Endothelial cell of umbilical vein (primary cell): ENCODE measurements at regions of chr10 and their contacts with region 1.

Region 1: DNA sequence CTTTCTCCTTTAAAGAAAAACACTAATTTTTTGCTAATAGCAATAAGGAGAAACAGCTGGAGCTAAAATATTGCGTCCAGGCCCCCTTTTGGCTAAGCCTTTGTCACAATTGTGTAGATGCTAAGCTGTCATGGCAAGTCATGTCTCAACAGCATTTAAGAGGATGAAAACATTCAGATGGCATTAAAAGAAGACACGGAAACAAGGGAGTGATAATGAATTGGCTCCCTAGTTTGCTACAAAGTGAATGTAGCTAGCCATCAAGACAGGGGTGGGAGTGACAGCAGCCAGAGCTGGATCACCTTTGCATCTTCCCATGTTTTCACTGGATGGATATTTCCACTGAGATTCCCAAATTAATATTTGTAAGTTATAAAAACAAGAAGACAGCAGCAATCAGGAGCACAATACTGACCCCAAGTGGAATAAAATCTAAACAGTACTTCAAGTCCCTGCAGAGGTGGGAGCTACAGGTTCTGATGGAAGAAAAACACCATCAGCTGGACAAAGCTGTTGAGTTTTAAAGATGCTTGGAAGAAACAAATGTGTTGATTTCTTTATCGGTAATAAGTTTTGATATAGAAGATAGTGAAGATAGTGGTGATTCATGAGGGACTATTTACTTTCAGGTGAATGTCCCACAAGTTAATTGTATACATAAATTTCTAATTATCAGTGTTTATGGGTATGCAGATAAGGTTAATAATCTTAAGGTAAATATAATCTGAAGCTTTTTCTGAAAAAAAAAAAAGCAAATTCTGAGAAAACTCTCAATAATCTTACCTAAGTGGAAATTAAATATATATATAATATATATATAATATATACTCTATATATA is 129.4 kb downstream of the SLC16A9 start:
- DNase-seq: peak; percentile 45
- H3K4me3 ChIP-seq: no peak overlapping the region
- H3K27ac ChIP-seq: no peak overlapping the region
- H3K4me1 ChIP-seq: no peaks in the 10 kb centered on the region
- H3K27me3 ChIP-seq: no peaks in the 10 kb centered on the region
- CTCF ChIP-seq: peak; percentile 7 to 18
- POLR2A ChIP-seq: no peak

Region 2: DNA sequence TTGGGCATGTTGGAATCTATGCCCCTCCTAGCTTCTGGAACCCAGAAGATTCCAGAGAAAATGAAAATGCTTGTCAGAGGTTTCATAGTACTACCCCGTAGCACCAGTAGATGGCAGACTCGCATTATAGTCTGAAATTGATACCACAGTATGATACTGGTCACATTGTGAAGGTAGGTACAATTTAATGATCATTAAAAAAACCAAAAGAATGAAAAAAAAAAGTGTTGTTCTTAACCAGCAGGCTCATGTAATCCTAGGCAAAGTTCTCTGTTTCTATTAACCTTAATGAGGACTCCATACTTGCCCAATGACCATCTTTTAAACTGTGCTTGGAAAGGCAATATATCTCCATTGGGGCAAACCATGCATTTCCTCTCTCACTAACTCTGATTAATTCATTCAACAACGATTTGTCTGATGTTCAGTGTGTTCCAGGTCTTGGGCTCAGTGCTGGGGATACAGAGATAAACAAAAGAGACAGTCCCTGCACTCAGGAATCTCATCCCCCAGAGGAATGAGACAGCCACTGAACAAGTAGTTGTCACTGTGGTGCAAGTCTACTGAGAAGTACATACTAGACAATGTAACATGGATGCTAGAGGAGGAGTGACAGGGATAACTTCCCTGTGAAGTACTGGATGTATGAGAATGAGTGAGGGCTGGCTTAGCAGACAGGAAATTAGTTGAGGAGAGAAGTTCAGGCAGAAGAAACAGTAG is 627.3 kb before region 1 on chr10:
- CTCF ChIA-PET with region 1: no interaction called
- POLR2A ChIA-PET with region 1: no interaction called
- dilution Hi-C with region 1: no loop called
- intact Hi-C with region 1: loop called (anchors 2 kb)
- DNase-seq: peak; percentile 47
- H3K4me3 ChIP-seq: no peak overlapping the region
- H3K27ac ChIP-seq: no peak overlapping the region
- H3K4me1 ChIP-seq: no peaks in the 10 kb centered on the region
- H3K27me3 ChIP-seq: no peaks in the 10 kb centered on the region
- CTCF ChIP-seq: peak; percentile 42 to 64
- POLR2A ChIP-seq: no peak

Region 3: DNA sequence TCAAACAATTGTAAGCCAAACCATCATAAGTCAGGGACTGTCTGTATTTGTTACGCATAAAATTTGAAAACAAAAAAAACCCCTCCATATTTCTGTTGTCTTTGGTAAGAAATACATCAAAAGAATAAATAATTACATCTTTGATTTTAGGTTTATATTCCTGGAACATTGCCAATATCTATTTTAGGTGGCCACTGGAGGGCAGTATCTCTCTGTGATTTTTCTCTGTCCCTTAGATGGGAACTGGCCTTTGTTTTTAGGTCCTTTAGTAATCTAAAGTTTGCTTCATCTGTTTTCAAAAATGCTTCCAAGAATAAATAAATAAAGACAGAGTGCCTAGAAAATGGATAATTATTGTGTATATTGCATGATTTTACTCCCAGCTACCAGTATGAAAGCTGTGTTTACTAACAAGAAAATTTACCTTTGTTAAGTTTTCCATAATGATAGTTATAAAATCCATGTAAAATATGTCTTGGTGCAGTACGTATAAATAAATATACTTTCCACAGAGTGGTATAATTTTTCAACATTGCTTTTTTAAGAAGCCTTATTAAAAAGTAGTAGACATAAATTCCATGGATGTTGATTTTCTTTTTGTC is 339.6 kb before region 1 on chr10:
- CTCF ChIA-PET with region 1: no interaction called
- POLR2A ChIA-PET with region 1: no interaction called
- dilution Hi-C with region 1: no loop called
- intact Hi-C with region 1: loop called (anchors 1 kb)
- DNase-seq: peak; percentile 52
- H3K4me3 ChIP-seq: no peak overlapping the region
- H3K27ac ChIP-seq: no peak overlapping the region
- H3K4me1 ChIP-seq: no peaks in the 10 kb centered on the region
- H3K27me3 ChIP-seq: no peaks in the 10 kb centered on the region
- CTCF ChIP-seq: peak; percentile 18 to 22
- POLR2A ChIP-seq: no peak

Region 4: GRCh38 chr10:59362959-59363381 is 217.3 kb before region 1 on chr10:
- CTCF ChIA-PET with region 1: no interaction called
- POLR2A ChIA-PET with region 1: no interaction called
- dilution Hi-C with region 1: no loop called
- intact Hi-C with region 1: loop called (anchors 1 kb)
- DNase-seq: peak; percentile 14
- H3K4me3 ChIP-seq: peak overlapping the region in 1 of 3 experiments; percentile 23
- H3K27ac ChIP-seq: no peak overlapping the region
- H3K4me1 ChIP-seq: no peaks in the 10 kb centered on the region
- H3K27me3 ChIP-seq: no peaks in the 10 kb centered on the region
- CTCF ChIP-seq: no peak
- POLR2A ChIP-seq: no peak

Region 5: DNA sequence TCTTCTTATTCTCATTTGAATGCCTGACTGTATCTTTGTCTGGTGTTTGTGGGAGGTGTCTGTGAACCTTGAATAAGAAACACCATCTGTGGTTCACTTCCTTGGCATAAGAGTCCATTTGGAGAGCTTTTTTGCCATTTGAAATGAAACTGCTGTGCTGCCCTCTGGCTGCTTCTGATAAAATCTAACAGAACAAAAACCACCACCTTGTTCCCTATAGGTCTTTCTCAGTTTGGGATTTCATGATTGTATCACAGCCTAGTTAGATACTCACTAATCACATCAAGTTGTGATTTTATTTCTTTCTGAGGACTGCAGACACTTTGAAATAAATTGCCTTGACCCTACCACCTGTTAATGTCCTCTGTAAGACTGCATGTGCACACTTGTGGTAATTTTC is 115.2 kb before region 1 on chr10:
- CTCF ChIA-PET with region 1: no interaction called
- POLR2A ChIA-PET with region 1: no interaction called
- dilution Hi-C with region 1: no loop called
- intact Hi-C with region 1: no loop called
- DNase-seq: no peak
- H3K4me3 ChIP-seq: no peak overlapping the region
- H3K27ac ChIP-seq: no peak overlapping the region
- H3K4me1 ChIP-seq: no peaks in the 10 kb centered on the region
- H3K27me3 ChIP-seq: no peaks in the 10 kb centered on the region
- CTCF ChIP-seq: no peak
- POLR2A ChIP-seq: no peak

Region 6: DNA sequence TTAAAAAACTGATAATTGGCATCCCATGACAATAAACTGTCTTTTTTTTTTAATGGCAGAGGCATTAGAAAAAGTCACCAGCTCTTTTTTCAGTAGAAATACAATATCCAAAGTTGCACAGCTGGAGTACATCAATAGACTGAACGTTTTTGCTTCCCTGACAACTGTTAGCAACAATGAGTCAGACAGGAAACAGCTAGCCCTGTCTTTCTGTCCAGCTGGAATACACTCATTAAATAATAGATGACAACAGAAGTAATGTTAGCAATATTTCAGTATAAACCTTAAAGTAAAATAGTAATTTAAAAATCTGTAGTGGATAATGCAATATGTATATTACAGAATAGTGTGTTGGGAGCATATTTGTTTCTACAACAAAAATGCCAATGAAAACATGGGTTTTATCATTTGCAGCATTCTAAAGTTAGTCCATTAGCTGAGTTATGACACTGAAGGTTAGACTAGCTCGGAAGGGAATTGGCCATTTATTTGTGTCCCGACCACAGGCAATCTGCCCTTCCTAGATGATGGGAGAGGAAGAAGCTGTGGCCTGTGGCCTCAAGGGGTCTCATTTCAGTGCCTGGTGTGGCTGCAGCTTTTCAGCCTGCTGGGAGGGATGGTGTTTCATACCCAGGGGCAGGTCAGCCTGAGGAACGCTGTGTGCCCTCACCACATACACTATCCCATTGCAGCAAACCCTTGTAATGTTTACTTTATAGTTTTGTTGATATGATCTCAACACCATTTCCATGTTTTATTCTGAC is 43.9 kb before region 1 on chr10:
- CTCF ChIA-PET with region 1: no interaction called
- POLR2A ChIA-PET with region 1: no interaction called
- dilution Hi-C with region 1: no loop called
- intact Hi-C with region 1: loop called (anchors 5 kb)
- DNase-seq: peak; percentile 78
- H3K4me3 ChIP-seq: no peak overlapping the region
- H3K27ac ChIP-seq: peak overlapping the region; percentile 27
- H3K4me1 ChIP-seq: peaks cover 11% of the 10 kb centered on the region
- H3K27me3 ChIP-seq: no peaks in the 10 kb centered on the region
- CTCF ChIP-seq: no peak
- POLR2A ChIP-seq: no peak

Region 7: GRCh38 chr10:59553162-59553900 is 26.9 kb before region 1 on chr10:
- CTCF ChIA-PET with region 1: no interaction called
- POLR2A ChIA-PET with region 1: no interaction called
- dilution Hi-C with region 1: no loop called
- intact Hi-C with region 1: loop called (anchors 5 kb)
- DNase-seq: no peak
- H3K4me3 ChIP-seq: no peak overlapping the region
- H3K27ac ChIP-seq: no peak overlapping the region
- H3K4me1 ChIP-seq: no peaks in the 10 kb centered on the region
- H3K27me3 ChIP-seq: no peaks in the 10 kb centered on the region
- CTCF ChIP-seq: no peak
- POLR2A ChIP-seq: no peak

Region 8: DNA sequence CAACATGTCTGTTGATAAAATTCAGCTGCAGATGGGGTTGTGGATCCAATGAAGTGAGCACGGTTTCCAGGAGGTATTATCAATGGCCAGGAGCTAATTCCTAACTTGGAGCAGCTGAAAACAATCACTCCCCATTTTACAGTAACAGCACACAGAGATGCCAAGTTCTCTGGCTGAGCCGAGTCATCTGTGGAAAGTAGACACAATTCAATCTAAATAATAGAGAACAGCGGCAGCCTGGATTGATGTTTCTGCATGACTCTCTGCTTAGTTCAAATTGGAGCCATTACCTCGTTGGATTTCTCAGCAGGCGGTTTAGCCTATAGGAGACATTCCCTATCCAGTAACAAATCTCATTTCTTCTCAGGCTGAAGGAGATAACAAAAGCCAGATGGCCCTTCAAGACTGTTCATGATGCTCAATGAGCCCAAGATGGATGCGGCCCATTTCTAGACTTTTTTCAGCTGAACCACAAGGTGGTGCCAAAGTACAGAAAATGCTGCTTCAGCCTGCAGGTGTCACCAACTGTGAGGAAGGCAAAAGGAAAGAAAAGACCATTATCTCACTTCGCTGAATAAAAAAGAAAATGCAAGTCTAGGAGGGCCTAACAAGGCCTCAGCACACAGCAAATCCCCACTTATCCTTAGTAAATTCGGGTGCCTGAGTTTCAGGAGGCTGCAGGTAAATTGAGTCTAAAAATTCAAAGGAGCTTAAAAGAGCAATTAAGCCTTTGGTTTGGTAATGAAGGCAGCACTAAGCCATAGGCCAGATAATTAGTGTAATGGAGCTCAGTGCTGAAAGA is 45.7 kb after region 1 on chr10:
- CTCF ChIA-PET with region 1: no interaction called
- POLR2A ChIA-PET with region 1: no interaction called
- dilution Hi-C with region 1: no loop called
- intact Hi-C with region 1: no loop called
- DNase-seq: peak; percentile 67
- H3K4me3 ChIP-seq: no peak overlapping the region
- H3K27ac ChIP-seq: no peak overlapping the region
- H3K4me1 ChIP-seq: no peaks in the 10 kb centered on the region
- H3K27me3 ChIP-seq: peaks cover 4 to 7% of the 10 kb centered on the region in 2 experiments
- CTCF ChIP-seq: peak; percentile 68 to 69
- POLR2A ChIP-seq: no peak

Region 9: GRCh38 chr10:59657724-59658123 is 77.5 kb after region 1 on chr10:
- CTCF ChIA-PET with region 1: no interaction called
- POLR2A ChIA-PET with region 1: no interaction called
- dilution Hi-C with region 1: no loop called
- intact Hi-C with region 1: no loop called
- DNase-seq: no peak
- H3K4me3 ChIP-seq: no peak overlapping the region
- H3K27ac ChIP-seq: no peak overlapping the region
- H3K4me1 ChIP-seq: no peaks in the 10 kb centered on the region
- H3K27me3 ChIP-seq: no peaks in the 10 kb centered on the region
- CTCF ChIP-seq: no peak
- POLR2A ChIP-seq: no peak

Region 10: GRCh38 chr10:59678884-59679301 is 98.6 kb after region 1 on chr10:
- CTCF ChIA-PET with region 1: no interaction called
- POLR2A ChIA-PET with region 1: no interaction called
- dilution Hi-C with region 1: no loop called
- intact Hi-C with region 1: no loop called
- DNase-seq: peak; percentile 24
- H3K4me3 ChIP-seq: no peak overlapping the region
- H3K27ac ChIP-seq: no peak overlapping the region
- H3K4me1 ChIP-seq: no peaks in the 10 kb centered on the region
- H3K27me3 ChIP-seq: no peaks in the 10 kb centered on the region
- CTCF ChIP-seq: no peak
- POLR2A ChIP-seq: no peak